Activated CD8-positive, alpha-beta T cell treated with anti-CD3 and anti-CD28 coated beads, Interleukin-2, amount 10 ng/mL, durations not matched to agents 7 days and 5 days (primary cell): ENCODE measurements at regions of chr5 and their contacts with region 1.

Region 1: GRCh38 chr5:140244525-140245025 is 58.3 kb downstream of the PFDN1 start:
- DNase-seq: peak; percentile 89
- ATAC-seq: peak; percentile 74
- H3K4me3 Mint-ChIP-seq: no peak overlapping the region
- H3K27ac Mint-ChIP-seq: peak overlapping the region; percentile 65
- H3K4me1 Mint-ChIP-seq: peaks cover 40% of the 10 kb centered on the region
- H3K27me3 Mint-ChIP-seq: no peaks in the 10 kb centered on the region

Region 2: DNA sequence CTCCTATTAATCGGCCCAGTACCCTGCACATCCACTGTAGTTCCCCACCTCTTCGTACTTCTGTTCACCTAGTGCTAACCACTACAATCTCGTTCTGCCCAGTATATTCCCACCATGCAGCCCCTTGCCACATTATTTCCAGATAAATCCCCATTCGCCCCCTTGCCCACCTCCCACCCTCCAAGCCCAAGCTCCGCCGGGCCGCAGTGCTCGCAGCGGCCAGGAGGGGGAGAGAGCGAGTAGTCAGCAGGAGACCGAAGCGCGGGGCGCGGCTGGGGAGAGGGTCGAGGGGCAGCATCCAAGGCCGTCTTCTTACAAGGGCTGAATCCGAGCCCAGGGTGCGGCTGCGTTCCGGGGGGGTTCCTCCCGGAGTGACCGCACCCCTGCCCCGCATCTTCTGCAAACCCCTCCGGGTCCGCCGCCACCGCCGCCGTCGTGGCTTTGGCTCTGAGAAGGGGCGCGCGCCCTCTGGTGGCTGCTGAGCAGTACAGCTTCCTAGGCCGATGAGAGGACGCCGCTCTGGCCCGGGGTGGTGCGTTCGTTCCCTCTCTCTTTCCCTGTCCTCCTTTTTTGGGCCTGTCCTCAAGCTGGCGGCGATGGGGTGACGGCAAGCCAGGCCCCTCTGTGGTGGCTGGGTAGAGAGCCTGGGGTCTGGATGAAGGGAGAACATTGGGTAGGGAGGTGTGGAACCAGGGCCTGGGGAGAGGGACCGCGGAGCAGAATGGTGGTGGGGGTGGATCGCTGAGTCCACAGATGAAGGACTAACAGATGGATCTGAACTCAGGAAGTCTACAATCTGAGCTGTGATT is 479.0 kb before region 1 on chr5:
- CTCF ChIA-PET with region 1: no interaction called
- POLR2A ChIA-PET with region 1: no interaction called
- DNase-seq: peak; percentile 86
- ATAC-seq: peak; percentile 91
- H3K4me3 Mint-ChIP-seq: peak overlapping the region; percentile 71
- H3K27ac Mint-ChIP-seq: no peak overlapping the region
- H3K4me1 Mint-ChIP-seq: peaks cover 16% of the 10 kb centered on the region
- H3K27me3 Mint-ChIP-seq: peaks cover 28% of the 10 kb centered on the region

Region 3: DNA sequence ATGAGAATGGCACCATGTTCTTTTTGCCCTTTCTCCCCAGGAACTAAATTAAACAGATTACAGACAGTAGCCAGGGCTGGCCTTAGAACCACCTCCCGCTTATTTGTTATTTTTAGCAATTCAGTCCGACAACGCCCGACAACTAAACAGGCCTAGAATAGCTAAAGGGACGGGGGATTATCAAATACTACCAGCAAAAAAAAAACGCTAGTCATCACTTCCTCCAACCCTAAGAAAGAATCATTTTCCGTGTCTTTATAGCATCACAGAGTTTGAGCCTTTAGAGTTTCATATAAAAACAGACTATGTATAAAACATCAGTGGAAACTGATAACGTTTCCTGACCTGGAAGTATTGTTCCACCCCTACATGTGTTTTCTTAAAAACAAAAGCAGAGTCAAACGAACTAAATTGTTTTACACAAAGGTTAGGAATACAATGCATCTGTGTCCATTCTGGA is 23.0 kb after region 1 on chr5:
- CTCF ChIA-PET with region 1: interaction called, 25 read pairs
- POLR2A ChIA-PET with region 1: no interaction called
- DNase-seq: no peak
- ATAC-seq: no peak
- H3K4me3 Mint-ChIP-seq: no peak overlapping the region
- H3K27ac Mint-ChIP-seq: peak overlapping the region; percentile 13
- H3K4me1 Mint-ChIP-seq: peaks cover 33% of the 10 kb centered on the region
- H3K27me3 Mint-ChIP-seq: no peaks in the 10 kb centered on the region

Region 4: DNA sequence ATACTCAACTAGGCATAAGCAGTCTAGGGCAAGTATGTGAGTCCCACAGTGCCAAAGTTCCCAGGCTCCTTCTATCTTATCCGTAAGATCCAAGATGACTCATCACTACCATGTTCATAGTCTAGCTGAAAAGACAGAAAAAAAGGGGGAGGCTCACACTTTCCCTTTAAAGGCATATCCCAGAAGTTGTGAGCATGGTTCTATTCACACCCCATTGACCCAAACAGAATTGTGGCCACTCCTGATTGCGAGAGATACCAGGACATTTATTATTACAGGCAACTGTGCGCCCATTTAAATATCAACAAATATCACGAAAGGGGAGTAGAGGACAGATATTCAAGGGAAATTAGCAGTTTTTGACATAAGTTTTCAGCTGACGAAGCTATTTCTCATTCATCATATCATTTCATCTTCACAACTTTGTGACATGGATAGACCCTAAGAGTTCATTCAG is 66.5 kb after region 1 on chr5:
- CTCF ChIA-PET with region 1: interaction called, 12 read pairs
- POLR2A ChIA-PET with region 1: no interaction called
- DNase-seq: no peak
- ATAC-seq: no peak
- H3K4me3 Mint-ChIP-seq: no peak overlapping the region
- H3K27ac Mint-ChIP-seq: no peak overlapping the region
- H3K4me1 Mint-ChIP-seq: peaks cover 14% of the 10 kb centered on the region
- H3K27me3 Mint-ChIP-seq: peaks cover 13% of the 10 kb centered on the region

Region 5: DNA sequence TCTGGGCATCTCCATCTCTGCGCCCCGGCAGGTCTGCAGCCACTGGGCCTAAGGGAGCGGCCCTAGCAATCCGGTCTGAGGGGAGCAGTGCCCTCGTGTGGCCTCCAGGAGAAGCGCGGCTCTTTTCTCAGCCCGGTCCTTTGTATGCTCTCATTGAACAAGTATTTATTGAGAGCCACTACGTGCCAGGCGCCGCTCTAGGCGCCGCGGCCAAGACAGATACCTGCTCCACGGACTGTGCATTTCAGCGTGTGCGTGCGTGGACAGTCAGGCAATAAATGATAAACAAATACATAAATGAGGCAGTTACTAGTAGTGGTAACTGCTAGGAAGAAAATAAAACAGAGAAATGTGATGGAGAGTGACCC is 113.1 kb after region 1 on chr5:
- CTCF ChIA-PET with region 1: interaction called, 796 read pairs
- POLR2A ChIA-PET with region 1: interaction called, 3 read pairs
- DNase-seq: peak; percentile 87
- ATAC-seq: peak; percentile 98
- H3K4me3 Mint-ChIP-seq: peak overlapping the region; percentile 70
- H3K27ac Mint-ChIP-seq: peak overlapping the region; percentile 73
- H3K4me1 Mint-ChIP-seq: peaks cover 15% of the 10 kb centered on the region
- H3K27me3 Mint-ChIP-seq: peaks cover 9% of the 10 kb centered on the region

Region 6: DNA sequence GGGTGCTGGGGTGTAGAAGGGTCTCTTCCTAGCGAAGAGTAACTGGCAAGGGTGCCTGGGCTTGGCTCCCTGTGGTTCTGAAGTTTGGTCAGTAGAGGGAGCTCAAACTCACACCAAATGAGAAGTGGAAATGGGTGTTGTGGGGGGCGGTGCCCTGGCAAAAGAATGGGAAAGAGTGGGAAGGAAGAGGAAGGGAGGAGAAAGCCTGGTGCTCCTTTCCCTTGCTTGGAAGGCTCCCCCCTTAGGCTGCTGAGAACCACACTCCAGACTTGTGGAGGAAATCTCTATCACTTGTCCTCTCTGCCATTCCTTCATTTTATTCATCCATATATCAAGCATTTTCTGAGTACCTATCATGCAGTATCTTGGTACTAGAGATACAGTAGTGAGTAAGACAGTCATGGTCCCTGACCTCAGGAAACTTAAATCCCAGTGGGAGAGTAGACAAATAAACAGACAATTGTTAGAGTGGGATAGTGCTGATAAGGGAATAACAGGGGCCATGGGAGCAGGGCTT is 128.5 kb after region 1 on chr5:
- CTCF ChIA-PET with region 1: interaction called, 14 read pairs
- POLR2A ChIA-PET with region 1: no interaction called
- DNase-seq: peak; percentile 59
- ATAC-seq: peak; percentile 63
- H3K4me3 Mint-ChIP-seq: no peak overlapping the region
- H3K27ac Mint-ChIP-seq: no peak overlapping the region
- H3K4me1 Mint-ChIP-seq: peaks cover 7% of the 10 kb centered on the region
- H3K27me3 Mint-ChIP-seq: no peaks in the 10 kb centered on the region